Activated T-helper 1 cell treated with anti-CD3 and anti-CD28 coated beads, Interleukin-12 subunit alpha, Interleukin-12 subunit beta, Interleukin-2, Interleukin-4 antibody, amounts not matched to agents 30 ng/mL and 10 ng/mL and 1 ng/mL, durations not matched to agents 14 hours and 24 hours and 36 hours (primary cell): ENCODE measurements at regions of chr10 and their contacts with region 1.

Region 1: DNA sequence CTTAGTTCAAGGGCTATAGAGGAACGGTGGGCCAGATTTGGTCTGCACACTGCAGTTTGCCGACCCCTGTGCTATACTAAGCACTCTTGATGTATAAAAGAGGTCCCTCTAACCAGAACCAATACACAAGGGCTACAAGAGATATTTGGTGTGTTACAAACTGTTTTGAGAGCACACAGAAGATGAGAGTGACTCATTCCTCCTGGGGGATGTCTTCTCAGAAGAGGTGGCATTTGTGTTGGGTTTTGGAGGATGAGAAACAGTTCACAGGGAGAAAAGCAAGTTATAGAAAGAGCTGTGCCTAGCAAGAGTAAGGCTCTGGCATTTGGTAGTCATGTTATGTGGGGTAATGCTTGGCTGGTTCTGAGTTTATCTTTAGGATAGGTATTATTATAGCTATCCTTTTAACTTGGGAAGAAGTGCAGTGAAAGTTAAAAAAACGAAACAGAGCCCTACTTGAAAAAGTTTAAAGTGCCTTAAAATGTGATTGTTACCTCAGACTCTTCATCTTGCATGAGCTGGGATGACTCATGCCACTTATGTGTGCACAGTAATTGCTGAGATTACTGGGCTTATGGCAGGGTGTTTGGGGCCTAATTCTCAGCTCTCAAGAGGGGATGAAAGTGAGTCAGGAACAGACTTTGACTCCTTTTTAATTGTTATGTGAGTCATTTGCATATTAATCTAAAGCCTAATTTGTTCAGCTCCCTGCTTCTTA is 160.4 kb downstream of the KIF20B start:
- DNase-seq: no peak
- H3K4me3 Mint-ChIP-seq: peak overlapping the region; percentile 13
- H3K27ac Mint-ChIP-seq: peak overlapping the region; percentile 79
- H3K4me1 Mint-ChIP-seq: peaks cover 20% of the 10 kb centered on the region
- H3K27me3 Mint-ChIP-seq: peaks cover 2% of the 10 kb centered on the region

Region 2: GRCh38 chr10:89837150-89837888 is 24.4 kb before region 1 on chr10:
- intact Hi-C with region 1: loop called (anchors 1 kb)
- DNase-seq: peak; percentile 3
- H3K4me3 Mint-ChIP-seq: peak overlapping the region; percentile 80
- H3K27ac Mint-ChIP-seq: peak overlapping the region; percentile 40
- H3K4me1 Mint-ChIP-seq: peaks cover 7% of the 10 kb centered on the region
- H3K27me3 Mint-ChIP-seq: peaks cover 12% of the 10 kb centered on the region

Region 3: GRCh38 chr10:89845541-89846277 is 16.0 kb before region 1 on chr10:
- intact Hi-C with region 1: loop called (anchors 1 kb)
- DNase-seq: no peak
- H3K4me3 Mint-ChIP-seq: no peak overlapping the region
- H3K27ac Mint-ChIP-seq: no peak overlapping the region
- H3K4me1 Mint-ChIP-seq: no peaks in the 10 kb centered on the region
- H3K27me3 Mint-ChIP-seq: peaks cover 2% of the 10 kb centered on the region

Region 4: GRCh38 chr10:90227217-90227656 is 365.5 kb after region 1 on chr10:
- intact Hi-C with region 1: loop called (anchors 2 kb)
- DNase-seq: no peak
- H3K4me3 Mint-ChIP-seq: no peak overlapping the region
- H3K27ac Mint-ChIP-seq: peak overlapping the region; percentile 63
- H3K4me1 Mint-ChIP-seq: peaks cover 6% of the 10 kb centered on the region
- H3K27me3 Mint-ChIP-seq: peaks cover 8% of the 10 kb centered on the region